AG04450 (cell line): ENCODE measurements at regions of chr19 and their contacts with region 1.

Region 1: DNA sequence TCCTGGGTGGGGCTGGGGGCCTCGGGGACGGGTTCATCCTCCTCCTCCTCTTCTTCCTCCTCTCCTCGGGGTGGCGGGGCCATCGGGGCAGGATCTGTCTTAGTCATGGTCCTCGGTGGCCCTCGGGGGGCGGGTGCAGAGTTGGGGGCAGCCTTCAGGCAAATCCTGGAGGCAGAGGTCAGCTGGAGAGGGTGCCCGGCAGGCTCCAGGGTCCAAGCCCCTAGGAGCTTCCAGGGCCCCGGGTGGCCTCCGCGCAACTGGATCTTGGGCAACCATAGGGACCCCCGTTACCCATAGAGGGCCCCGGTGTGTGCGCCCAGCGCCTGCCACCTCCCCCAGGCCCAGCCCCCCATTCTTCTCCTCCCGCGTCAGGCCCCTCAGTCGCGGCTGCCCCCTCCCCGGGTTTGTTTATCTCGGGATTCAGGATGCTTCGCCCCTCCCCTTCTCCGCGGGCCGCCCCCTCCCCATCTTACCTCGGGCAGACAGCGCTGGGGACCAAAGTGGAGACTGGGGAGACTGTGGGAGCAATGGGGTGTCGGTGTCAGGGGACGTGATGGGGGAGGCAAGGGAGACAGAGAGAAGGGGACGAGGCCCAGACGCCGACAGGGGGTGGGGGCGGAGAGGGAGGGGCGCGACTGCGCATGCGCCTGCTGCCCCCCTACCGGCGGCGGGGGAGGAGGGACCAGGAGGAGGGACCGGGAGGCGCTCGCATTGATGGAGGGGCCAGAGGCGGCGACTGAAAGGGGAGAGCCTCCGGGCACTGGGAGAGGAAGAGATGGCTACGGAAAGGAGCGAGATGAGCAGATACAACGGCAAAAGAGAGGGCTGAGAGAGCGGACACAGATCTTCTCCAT is at the start of gene CLIP3:
- DNase-seq: peak; percentile 32
- H3K4me3 ChIP-seq: peak within 1 kb of the TSS; percentile 89
- H3K27ac ChIP-seq: no peak within 1 kb of the TSS
- H3K27me3 ChIP-seq: no peaks in the 10 kb centered on the region
- CTCF ChIP-seq: no peak
- polyA plus RNA-seq, gene CLIP3: 18.1 and 29.4 TPM in 2 replicates

Region 2: DNA sequence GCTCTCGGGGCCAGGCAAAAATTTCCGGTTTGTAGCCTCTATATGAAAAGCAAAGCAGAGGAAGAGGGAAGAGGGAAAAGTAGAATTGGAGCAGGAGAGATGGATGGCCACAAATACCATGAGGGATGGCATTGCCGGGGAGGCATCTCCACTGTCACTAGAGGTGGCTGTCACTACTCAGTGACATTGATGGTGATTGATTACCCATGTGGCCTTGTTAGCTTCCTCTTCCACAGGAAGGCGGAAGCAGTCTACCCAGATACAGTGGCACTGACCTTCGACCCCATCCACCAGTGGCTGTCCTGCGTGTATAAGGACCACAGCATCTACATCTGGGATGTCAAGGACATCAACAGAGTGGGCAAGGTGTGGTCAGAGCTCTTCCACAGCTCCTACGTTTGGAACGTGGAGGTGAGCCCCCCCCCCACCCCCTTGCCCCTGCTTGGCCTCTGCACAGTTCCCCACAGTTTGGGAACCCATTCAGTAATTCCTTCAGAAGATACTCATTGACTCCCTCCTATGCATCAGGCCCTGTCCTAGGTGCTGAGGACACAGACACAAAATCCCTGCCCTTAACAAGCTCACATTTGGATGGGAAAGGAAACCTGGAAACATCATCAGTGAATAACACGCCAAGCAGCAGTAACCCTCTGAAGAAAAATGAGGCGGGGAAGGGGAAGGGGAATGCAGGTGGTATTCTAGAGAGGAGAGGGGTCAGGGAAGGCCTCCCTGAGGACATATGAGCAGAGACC is 40.8 kb after region 1 on chr19:
- CTCF ChIA-PET with region 1: no interaction called
- POLR2A ChIA-PET with region 1: interaction called, 10 read pairs
- DNase-seq: no peak
- H3K4me3 ChIP-seq: no peak overlapping the region
- H3K27ac ChIP-seq: no peak overlapping the region
- H3K27me3 ChIP-seq: no peaks in the 10 kb centered on the region
- CTCF ChIP-seq: no peak

Region 3: DNA sequence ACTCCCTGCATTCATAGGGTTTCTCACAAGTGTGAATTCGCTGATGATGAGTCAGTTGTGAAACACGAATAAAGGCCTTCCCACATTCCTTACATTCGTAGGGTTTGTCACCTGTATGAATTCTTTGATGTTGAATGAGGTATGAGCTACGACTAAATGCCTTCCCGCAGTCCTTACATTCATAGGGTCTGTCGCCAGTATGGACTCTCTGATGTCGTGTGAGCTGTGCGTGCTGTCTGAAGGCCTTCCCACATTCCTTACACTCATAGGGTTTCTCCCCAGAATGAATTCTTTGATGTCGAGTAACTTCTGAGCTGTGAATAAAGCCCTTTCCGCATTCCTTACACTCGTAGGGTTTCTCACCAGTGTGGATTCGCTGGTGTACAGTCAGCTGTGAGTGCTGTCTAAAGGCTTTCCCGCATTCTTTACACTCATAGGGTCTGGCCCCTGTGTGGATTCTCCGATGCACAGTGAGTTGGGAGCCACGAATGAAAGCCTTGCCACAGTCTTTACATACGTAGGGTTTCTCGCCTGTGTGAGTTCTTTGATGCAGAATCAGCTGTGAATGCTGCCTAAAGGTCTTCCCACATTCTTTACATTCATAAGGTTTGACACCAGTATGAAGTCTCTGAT is 150.2 kb after region 1 on chr19:
- CTCF ChIA-PET with region 1: no interaction called
- POLR2A ChIA-PET with region 1: no interaction called
- DNase-seq: no peak
- H3K4me3 ChIP-seq: no peak overlapping the region
- H3K27ac ChIP-seq: no peak overlapping the region
- H3K27me3 ChIP-seq: no peaks in the 10 kb centered on the region
- CTCF ChIP-seq: no peak